ENCODE measurements at regions of chr1 and their contacts with region 1.

Region 1: GRCh38 chr1:166910396-166910994 is 34.4 kb upstream of the TADA1 start:
- DNase-seq: peak; percentile 69 to 90
- H3K4me3 ChIP-seq: no peak overlapping the region
- H3K27ac ChIP-seq: no peak overlapping the region
- H3K4me1 ChIP-seq: peaks cover 20% of the 10 kb centered on the region
- H3K27me3 ChIP-seq: no peaks in the 10 kb centered on the region
- CTCF ChIP-seq: peak; percentile 88

Region 2: DNA sequence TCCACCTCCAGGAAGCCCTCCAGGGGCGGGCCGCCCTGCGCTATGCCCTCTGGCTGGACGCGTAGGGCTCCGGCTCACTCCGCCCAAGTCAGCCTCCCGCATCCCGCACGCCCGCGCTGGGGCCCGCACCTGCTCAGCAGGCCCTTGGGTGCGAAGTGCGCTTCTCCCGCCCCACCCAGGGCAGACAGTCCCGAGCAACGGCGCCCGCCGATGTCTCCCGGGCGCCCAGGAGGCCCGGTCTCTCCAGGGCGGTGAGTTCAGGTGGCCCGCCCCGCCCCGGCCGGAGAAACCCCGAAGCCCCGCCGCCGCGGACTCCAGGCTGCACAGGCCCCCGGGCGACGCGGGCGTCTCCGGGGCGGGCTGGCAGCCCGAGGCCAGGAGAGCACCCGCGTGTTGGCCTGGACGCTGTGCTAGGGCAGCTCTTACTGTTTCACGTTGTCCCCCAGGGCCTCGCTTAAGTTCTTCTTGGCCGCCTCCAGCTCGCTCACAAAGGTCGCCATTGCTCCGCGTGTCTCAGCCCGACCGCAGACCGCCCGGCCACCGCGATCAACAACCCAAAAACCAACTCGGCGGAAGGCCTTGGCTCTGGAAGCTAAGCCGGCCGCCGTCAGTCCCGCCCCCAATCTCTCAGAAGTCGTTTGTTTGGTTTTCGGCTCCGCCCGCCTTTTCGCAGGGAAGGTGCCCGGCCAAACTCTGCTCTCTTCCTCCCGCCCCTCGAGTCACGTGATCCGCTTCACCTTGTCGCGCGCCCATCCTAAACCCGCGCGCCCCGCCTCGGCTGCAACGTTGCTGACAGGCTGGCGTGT is 34.6 kb before region 1 on chr1 and contains the start of gene TADA1:
- CTCF ChIA-PET with region 1: interaction called, 6 read pairs
- POLR2A ChIA-PET with region 1: no interaction called
- intact Hi-C with region 1: loop called (anchors 1 kb)
- DNase-seq: peak; percentile 91 to 96
- H3K4me3 ChIP-seq: peak within 1 kb of the TSS; percentile 87
- H3K27ac ChIP-seq: peak within 1 kb of the TSS; percentile 76
- H3K4me1 ChIP-seq: peaks cover 20% of the 10 kb centered on the region
- H3K27me3 ChIP-seq: no peaks in the 10 kb centered on the region
- CTCF ChIP-seq: no peak
- total RNA-seq, gene TADA1: 5.2 and 5.6 TPM in 2 replicates

Region 3: DNA sequence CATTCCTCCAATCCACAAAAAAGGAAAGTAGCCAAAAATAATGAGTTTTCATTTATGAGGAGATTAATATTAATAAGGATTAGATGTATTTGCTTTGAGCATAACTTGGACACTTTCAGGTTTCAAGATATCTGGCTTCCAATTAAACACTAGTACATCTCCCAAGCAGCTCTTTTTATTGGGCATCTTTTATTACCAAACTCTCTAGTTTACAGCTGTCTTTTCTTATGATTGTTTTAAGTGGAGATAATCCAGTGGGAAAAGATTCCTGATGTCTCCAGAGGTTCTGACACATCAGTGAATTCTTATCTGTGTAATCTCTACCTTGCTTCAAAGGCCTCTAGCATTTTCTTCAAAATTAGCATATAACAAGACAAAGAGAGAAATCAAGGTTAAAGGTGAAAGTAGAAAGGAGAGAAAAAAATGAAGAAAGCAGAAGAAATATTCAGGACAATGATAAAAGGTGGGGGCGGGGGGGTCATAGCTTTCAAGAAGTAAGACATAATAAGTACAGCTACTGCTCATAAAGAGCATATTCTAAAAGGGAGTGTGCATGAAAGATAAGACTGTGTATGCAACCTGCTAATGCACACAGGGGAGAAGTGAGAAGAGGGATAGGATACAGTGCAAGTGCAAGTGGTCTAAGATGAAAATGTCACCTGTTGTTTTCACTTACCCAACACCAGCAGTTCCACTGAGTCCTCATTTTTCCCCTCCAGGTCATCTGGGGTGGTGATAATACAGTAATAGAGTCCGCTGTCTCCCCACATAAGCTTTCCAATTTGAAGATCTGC is 45.8 kb after region 1 on chr1:
- CTCF ChIA-PET with region 1: interaction called, 13 read pairs
- POLR2A ChIA-PET with region 1: no interaction called
- intact Hi-C with region 1: no loop called
- DNase-seq: no peak
- H3K4me3 ChIP-seq: no peak overlapping the region
- H3K27ac ChIP-seq: no peak overlapping the region
- H3K4me1 ChIP-seq: peaks cover 6% of the 10 kb centered on the region; the same call in 1 of the 2 replicates
- H3K27me3 ChIP-seq: peaks cover 24% of the 10 kb centered on the region; the same call in 1 of the 2 replicates
- CTCF ChIP-seq: no peak

Region 4: DNA sequence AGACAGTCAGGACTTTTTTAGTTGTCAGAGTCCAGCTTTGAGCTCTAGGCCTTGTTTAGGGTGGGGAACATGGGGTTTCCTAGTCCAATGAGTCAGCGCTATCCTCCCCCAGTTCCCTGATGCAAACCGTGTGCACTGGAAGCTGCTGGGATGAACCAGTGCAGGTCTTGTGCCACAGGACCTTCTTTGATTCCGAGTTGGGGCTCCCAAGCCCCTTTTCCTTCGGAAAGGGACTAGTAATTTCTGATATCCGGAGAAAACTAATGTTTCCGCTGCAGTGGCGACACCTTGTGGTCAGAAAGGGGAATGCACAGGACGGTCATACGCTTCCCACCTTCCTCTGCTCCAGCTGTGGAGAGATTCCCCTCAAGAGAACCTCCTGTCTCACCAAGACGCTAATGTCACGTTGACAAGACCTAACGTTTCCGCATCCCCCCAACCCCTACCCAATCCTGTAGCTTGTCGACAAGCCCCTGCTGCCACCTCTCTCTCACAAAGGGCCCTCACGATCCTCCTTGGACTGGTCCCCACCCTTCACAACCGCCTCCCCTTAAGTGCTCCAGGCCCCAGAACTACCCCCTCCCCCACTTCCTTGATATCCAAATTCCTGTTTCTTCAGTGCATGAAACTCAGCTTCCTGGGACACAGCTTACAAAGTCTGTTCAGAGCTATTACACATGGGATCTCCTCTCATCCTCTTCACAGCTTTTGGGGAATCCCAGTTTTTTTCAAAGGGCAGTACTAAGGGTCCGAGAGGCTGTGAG is 148.7 kb after region 1 on chr1:
- CTCF ChIA-PET with region 1: interaction called, 18 read pairs
- POLR2A ChIA-PET with region 1: interaction called, 9 read pairs
- intact Hi-C with region 1: loop called (anchors 1 kb)
- DNase-seq: peak; percentile 58 to 63
- H3K4me3 ChIP-seq: no peak overlapping the region
- H3K27ac ChIP-seq: no peak overlapping the region
- H3K4me1 ChIP-seq: no peaks in the 10 kb centered on the region; the same call in 1 of the 2 replicates
- H3K27me3 ChIP-seq: no peaks in the 10 kb centered on the region
- CTCF ChIP-seq: peak; percentile 97

Region 5: GRCh38 chr1:167442124-167442848 is 531.8 kb after region 1 on chr1:
- CTCF ChIA-PET with region 1: no interaction called
- POLR2A ChIA-PET with region 1: no interaction called
- intact Hi-C with region 1: loop called (anchors 1 kb)
- DNase-seq: peak; percentile 92
- H3K4me3 ChIP-seq: 0 out of 2 replicates have a peak overlapping the region, but pooled peaks have one; percentile 3
- H3K27ac ChIP-seq: peak overlapping the region; percentile 52
- H3K4me1 ChIP-seq: peaks cover 21% of the 10 kb centered on the region
- H3K27me3 ChIP-seq: no peaks in the 10 kb centered on the region
- CTCF ChIP-seq: peak; percentile 91

Region 6: GRCh38 chr1:167533851-167534300 is 623.4 kb after region 1 on chr1:
- CTCF ChIA-PET with region 1: no interaction called
- POLR2A ChIA-PET with region 1: no interaction called
- intact Hi-C with region 1: loop called (anchors 1 kb)
- DNase-seq: peak; percentile 52 to 67
- H3K4me3 ChIP-seq: no peak overlapping the region
- H3K27ac ChIP-seq: no peak overlapping the region
- H3K4me1 ChIP-seq: no peaks in the 10 kb centered on the region
- H3K27me3 ChIP-seq: no peaks in the 10 kb centered on the region
- CTCF ChIP-seq: peak; percentile 91

Region 7: DNA sequence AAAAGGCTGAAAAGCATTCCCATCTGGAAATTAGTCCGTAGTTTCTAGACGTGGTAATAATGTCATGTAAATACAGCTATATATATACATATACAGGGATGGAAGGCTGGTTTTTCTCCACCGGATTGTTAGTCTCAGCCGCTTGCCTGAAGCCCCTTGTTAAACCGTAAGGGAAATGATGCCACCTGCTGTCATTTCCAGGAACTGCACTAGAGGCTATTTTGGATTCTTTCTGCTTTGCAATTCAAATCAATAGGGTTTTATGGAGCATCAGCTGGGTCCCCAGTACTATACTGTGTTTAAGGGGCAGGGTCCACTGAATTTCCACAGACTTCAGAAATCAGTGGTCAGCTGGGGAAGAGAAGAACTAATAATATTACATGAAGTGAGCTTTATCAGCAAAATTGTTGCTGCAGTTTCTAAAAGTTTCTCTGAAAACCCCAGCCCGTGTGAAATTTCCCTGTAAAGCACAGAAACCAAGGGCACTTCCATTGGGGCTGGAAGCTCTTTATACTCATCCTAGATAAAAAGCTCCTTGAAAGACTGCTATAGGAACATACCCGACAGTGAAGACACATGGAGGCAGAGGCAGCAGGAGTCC is 777.5 kb after region 1 on chr1:
- CTCF ChIA-PET with region 1: no interaction called
- POLR2A ChIA-PET with region 1: no interaction called
- intact Hi-C with region 1: loop called (anchors 5 kb)
- DNase-seq: peak; percentile 63
- H3K4me3 ChIP-seq: no peak overlapping the region
- H3K27ac ChIP-seq: no peak overlapping the region
- H3K4me1 ChIP-seq: peaks cover 13% of the 10 kb centered on the region
- H3K27me3 ChIP-seq: no peaks in the 10 kb centered on the region
- CTCF ChIP-seq: peak; percentile 95